CD8-positive, alpha-beta T cell (primary cell): ENCODE measurements at regions of chr1 and their contacts with region 1.

Region 1: DNA sequence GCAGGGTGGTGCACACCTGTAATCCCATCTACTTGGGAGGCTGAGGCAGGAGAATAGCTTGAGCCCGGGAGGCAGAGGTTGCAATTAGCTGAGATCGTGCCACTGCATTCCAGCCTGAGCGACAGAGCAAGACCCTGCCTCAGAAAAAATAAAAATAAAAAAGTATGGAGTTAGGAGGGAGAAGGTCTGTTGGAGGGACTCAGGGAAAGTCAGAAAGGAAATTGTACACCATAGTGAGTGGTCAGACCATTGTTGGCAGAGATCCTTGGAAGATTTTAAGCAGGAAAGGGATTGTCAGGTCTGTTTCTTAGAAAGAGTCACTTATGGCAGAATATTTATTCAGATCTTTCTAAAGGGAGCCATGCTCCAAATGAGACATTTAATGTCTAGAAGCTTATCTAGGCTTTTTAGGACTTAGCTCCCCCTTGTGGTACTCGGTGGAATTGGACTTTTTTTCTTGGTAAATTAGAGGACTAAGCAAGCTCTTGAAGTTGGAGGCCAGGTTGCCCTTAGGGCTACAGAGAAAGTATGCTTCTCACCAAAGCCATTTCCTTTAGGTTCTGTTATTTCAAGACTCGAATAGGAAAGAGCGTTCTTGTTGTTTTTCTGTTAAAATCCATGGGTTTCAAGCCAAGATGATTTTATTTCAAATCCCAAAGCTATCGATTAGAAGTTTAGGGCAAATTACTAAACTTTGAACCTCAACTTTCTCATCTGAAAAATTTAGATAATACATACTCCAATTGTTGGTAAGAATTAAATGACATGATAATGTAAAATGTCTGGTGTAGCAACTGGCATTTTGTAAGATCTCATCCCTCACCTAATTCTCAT is 16.5 kb downstream of the MIA3 start:
- DNase-seq: peak; percentile 33 to 88 (median 67)
- ATAC-seq: peak; percentile 96
- H3K4me3 ChIP-seq: no peak overlapping the region
- H3K4me3 Mint-ChIP-seq: no peak overlapping the region
- H3K27ac ChIP-seq: peak overlapping the region in 1 of 2 experiments; percentile 42
- H3K27ac Mint-ChIP-seq: peak overlapping the region; percentile 55
- H3K4me1 ChIP-seq: peaks cover 7% of the 10 kb centered on the region
- H3K4me1 Mint-ChIP-seq: peaks cover 12% of the 10 kb centered on the region
- H3K27me3 ChIP-seq: no peaks in the 10 kb centered on the region
- H3K27me3 Mint-ChIP-seq: no peaks in the 10 kb centered on the region
- CTCF ChIP-seq: peak; percentile 87

Region 2: GRCh38 chr1:220879076-220879508 is 1755.3 kb before region 1 on chr1 and contains the start of gene HLX:
- CTCF ChIA-PET with region 1: no interaction called
- POLR2A ChIA-PET with region 1: no interaction called
- intact Hi-C with region 1: loop called in 1 of 2 experiments (anchors 10 kb)
- DNase-seq: peak in 1 of 9 experiments; percentile 36
- ATAC-seq: no peak
- H3K4me3 ChIP-seq: peak within 1 kb of the TSS; percentile 12 to 37
- H3K4me3 Mint-ChIP-seq: peak within 1 kb of the TSS; percentile 71
- H3K27ac ChIP-seq: no peak within 1 kb of the TSS
- H3K27ac Mint-ChIP-seq: no peak within 1 kb of the TSS
- H3K4me1 ChIP-seq: peaks cover 19% of the 10 kb centered on the region
- H3K4me1 Mint-ChIP-seq: peaks cover 31% of the 10 kb centered on the region
- H3K27me3 ChIP-seq: peaks cover 16 to 25% of the 10 kb centered on the region in 2 experiments
- H3K27me3 Mint-ChIP-seq: peaks cover 81% of the 10 kb centered on the region
- CTCF ChIP-seq: no peak
- total RNA-seq, gene HLX: not detected

Region 3: GRCh38 chr1:222095606-222096475 is 538.6 kb before region 1 on chr1:
- CTCF ChIA-PET with region 1: interaction called, 3 read pairs
- POLR2A ChIA-PET with region 1: no interaction called
- intact Hi-C with region 1: loop called in 1 of 2 experiments (anchors 10 kb)
- DNase-seq: peak; percentile 13 to 75 (median 57)
- ATAC-seq: peak; percentile 77
- H3K4me3 ChIP-seq: no peak overlapping the region
- H3K4me3 Mint-ChIP-seq: no peak overlapping the region
- H3K27ac ChIP-seq: no peak overlapping the region
- H3K27ac Mint-ChIP-seq: no peak overlapping the region
- H3K4me1 ChIP-seq: no peaks in the 10 kb centered on the region
- H3K4me1 Mint-ChIP-seq: no peaks in the 10 kb centered on the region
- H3K27me3 ChIP-seq: no peaks in the 10 kb centered on the region
- H3K27me3 Mint-ChIP-seq: peaks cover 3% of the 10 kb centered on the region
- CTCF ChIP-seq: peak; percentile 93

Region 4: GRCh38 chr1:222465211-222466041 is 169.0 kb before region 1 on chr1:
- CTCF ChIA-PET with region 1: interaction called, 33 read pairs
- POLR2A ChIA-PET with region 1: interaction called, 5 read pairs
- intact Hi-C with region 1: loop called (anchors 1 kb)
- DNase-seq: peak; percentile 66 to 89 (median 71)
- ATAC-seq: peak; percentile 94
- H3K4me3 ChIP-seq: peak overlapping the region; percentile 54 to 68
- H3K4me3 Mint-ChIP-seq: peak overlapping the region; percentile 85
- H3K27ac ChIP-seq: peak overlapping the region; percentile 58 to 65
- H3K27ac Mint-ChIP-seq: peak overlapping the region; percentile 93
- H3K4me1 ChIP-seq: peaks cover 6% of the 10 kb centered on the region
- H3K4me1 Mint-ChIP-seq: peaks cover 14% of the 10 kb centered on the region
- H3K27me3 ChIP-seq: no peaks in the 10 kb centered on the region
- H3K27me3 Mint-ChIP-seq: no peaks in the 10 kb centered on the region
- CTCF ChIP-seq: peak; percentile 100

Region 5: GRCh38 chr1:222589462-222590302 is 44.7 kb before region 1 on chr1 and contains the start of gene TAF1A:
- CTCF ChIA-PET with region 1: interaction called, 13 read pairs
- POLR2A ChIA-PET with region 1: interaction called, 4 read pairs
- intact Hi-C with region 1: loop called in 1 of 2 experiments (anchors 5 kb)
- DNase-seq: peak; percentile 69 to 93 (median 86)
- ATAC-seq: peak; percentile 98
- H3K4me3 ChIP-seq: peak within 1 kb of the TSS; percentile 68 to 77
- H3K4me3 Mint-ChIP-seq: peak within 1 kb of the TSS; percentile 98
- H3K27ac ChIP-seq: peak within 1 kb of the TSS; percentile 85 to 87
- H3K27ac Mint-ChIP-seq: peak within 1 kb of the TSS; percentile 99
- H3K4me1 ChIP-seq: peaks cover 11% of the 10 kb centered on the region
- H3K4me1 Mint-ChIP-seq: peaks cover 52% of the 10 kb centered on the region
- H3K27me3 ChIP-seq: no peaks in the 10 kb centered on the region
- H3K27me3 Mint-ChIP-seq: no peaks in the 10 kb centered on the region
- CTCF ChIP-seq: no peak
- total RNA-seq, gene TAF1A: 5.3 to 5.6 TPM

Region 6: GRCh38 chr1:222617367-222617951 is 16.9 kb before region 1 on chr1:
- CTCF ChIA-PET with region 1: interaction called, 11 read pairs
- POLR2A ChIA-PET with region 1: no interaction called
- intact Hi-C with region 1: loop called (anchors 1 kb)
- DNase-seq: peak; percentile 88 to 99 (median 93)
- ATAC-seq: peak; percentile 91
- H3K4me3 ChIP-seq: peak overlapping the region; percentile 67 to 68
- H3K4me3 Mint-ChIP-seq: peak overlapping the region; percentile 93
- H3K27ac ChIP-seq: peak overlapping the region; percentile 83
- H3K27ac Mint-ChIP-seq: peak overlapping the region; percentile 98
- H3K4me1 ChIP-seq: peaks cover 20% of the 10 kb centered on the region
- H3K4me1 Mint-ChIP-seq: peaks cover 31% of the 10 kb centered on the region
- H3K27me3 ChIP-seq: peaks cover 0 to 3% of the 10 kb centered on the region in 2 experiments
- H3K27me3 Mint-ChIP-seq: peaks cover 16% of the 10 kb centered on the region
- CTCF ChIP-seq: no peak

Region 7: DNA sequence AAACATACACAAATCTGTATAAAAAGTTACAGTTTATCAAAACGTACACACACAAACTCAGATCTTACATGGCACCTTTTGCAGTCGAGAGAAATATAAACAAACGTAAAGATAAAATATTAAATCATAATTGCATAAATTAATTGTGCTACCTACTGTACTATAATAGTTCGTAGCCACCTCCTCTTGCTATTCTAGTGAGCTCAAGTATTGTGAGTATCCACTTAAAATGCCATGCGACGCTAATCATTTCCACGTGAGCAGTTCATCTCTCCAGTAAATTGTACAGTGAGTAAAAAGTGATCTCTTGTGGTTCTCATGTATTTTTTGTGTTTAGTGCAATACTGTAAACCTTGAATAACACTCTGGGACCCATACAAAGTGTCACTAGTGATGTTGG is 10.2 kb before region 1 on chr1:
- CTCF ChIA-PET with region 1: interaction called, 13 read pairs
- POLR2A ChIA-PET with region 1: no interaction called
- intact Hi-C with region 1: no loop called
- DNase-seq: no peak
- ATAC-seq: no peak
- H3K4me3 ChIP-seq: no peak overlapping the region
- H3K4me3 Mint-ChIP-seq: no peak overlapping the region
- H3K27ac ChIP-seq: no peak overlapping the region
- H3K27ac Mint-ChIP-seq: no peak overlapping the region
- H3K4me1 ChIP-seq: peaks cover 6% of the 10 kb centered on the region
- H3K4me1 Mint-ChIP-seq: peaks cover 23% of the 10 kb centered on the region
- H3K27me3 ChIP-seq: no peaks in the 10 kb centered on the region
- H3K27me3 Mint-ChIP-seq: no peaks in the 10 kb centered on the region
- CTCF ChIP-seq: no peak